ENCODE measurements at regions of chr12 and their contacts with region 1.

Region 1: GRCh38 chr12:10033783-10034545 is 3.5 kb downstream of the CLEC9A start:
- DNase-seq: no peak
- ATAC-seq: no peak
- H3K4me3 ChIP-seq: no peak overlapping the region
- H3K27ac ChIP-seq: no peak overlapping the region
- H3K4me1 ChIP-seq: no peaks in the 10 kb centered on the region
- H3K27me3 ChIP-seq: peaks cover 0 to 5% of the 10 kb centered on the region in 2 experiments; a peak in 1 of 5 replicates
- CTCF ChIP-seq: peak in 1 of 3 experiments; percentile 40; a peak in 2 of 6 replicates
- EP300 ChIP-seq: no peak
- POLR2A ChIP-seq: no peak
- RAD21 ChIP-seq: peak; percentile 12 to 36; a peak in 2 of 4 replicates

Region 2: DNA sequence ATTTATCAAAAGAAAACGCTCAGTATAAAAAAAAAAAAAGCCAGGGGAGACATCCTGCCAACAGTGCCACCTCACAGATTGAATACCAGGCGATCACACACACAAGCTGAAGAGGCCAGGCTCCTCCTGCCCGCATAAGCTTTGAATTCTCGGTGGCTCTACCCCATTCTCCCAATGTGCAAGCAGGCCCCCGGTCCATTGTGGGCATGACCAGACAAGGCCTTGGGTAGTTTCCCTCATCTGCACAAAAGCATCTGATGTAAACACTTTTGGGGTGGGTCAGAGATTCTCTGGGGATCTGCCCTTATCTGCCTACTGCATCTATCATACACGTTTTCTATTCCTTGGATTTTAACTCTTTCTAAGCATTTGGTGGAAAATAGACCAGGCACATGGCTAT is 136.4 kb before region 1 on chr12:
- CTCF ChIA-PET with region 1: no interaction called
- POLR2A ChIA-PET with region 1: no interaction called
- in situ Hi-C with region 1: no loop called
- intact Hi-C with region 1: no loop called
- DNase-seq: no peak
- ATAC-seq: no peak
- H3K4me3 ChIP-seq: no peak overlapping the region
- H3K27ac ChIP-seq: no peak overlapping the region
- H3K4me1 ChIP-seq: peaks cover 0 to 6% of the 10 kb centered on the region in 2 experiments; a peak in 2 of 5 replicates
- H3K27me3 ChIP-seq: no peaks in the 10 kb centered on the region
- CTCF ChIP-seq: no peak
- EP300 ChIP-seq: no peak
- POLR2A ChIP-seq: no peak
- RAD21 ChIP-seq: no peak

Region 3: GRCh38 chr12:10140001-10140400 is 106.0 kb after region 1 on chr12:
- CTCF ChIA-PET with region 1: no interaction called
- POLR2A ChIA-PET with region 1: no interaction called
- in situ Hi-C with region 1: no loop called
- intact Hi-C with region 1: loop called (anchors 5 kb)
- DNase-seq: peak in 2 of 4 experiments; percentile 7 to 44
- ATAC-seq: no peak
- H3K4me3 ChIP-seq: no peak overlapping the region
- H3K27ac ChIP-seq: no peak overlapping the region
- H3K4me1 ChIP-seq: no peaks in the 10 kb centered on the region
- H3K27me3 ChIP-seq: no peaks in the 10 kb centered on the region; a peak in 1 of 5 replicates
- CTCF ChIP-seq: peak; percentile 31 to 55 (median 43); a peak in 3 of 6 replicates
- EP300 ChIP-seq: no peak
- POLR2A ChIP-seq: no peak
- RAD21 ChIP-seq: peak; percentile 61 to 67